ENCODE measurements at regions of chr7 and their contacts with region 1.

Region 1: DNA sequence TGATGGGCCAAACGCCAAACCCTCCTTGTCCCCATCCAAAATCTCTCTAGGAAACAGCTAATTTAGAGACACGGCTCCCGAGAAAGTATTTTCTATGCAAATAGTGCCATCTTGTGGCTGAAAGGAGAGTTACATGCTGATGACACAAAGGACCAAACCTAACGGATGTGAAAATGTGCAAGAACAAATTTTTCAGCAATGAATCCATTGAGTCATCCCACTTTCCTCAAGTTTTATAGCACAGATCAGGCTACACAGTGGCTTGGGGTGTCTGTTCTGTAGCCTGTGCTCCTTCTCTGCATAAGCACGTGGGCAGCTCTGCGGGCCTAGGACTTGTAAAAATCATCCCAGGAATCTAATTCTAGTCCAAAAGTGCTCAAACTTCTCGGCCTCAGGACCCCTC is 154.8 kb upstream of the PRR15 start:
- DNase-seq: peak in 1 of 2 experiments; percentile 76
- H3K4me3 ChIP-seq: no peak overlapping the region
- H3K4me3 Mint-ChIP-seq: no peak overlapping the region
- H3K27ac Mint-ChIP-seq: no peak overlapping the region
- H3K4me1 ChIP-seq: peaks cover 23% of the 10 kb centered on the region
- H3K4me1 Mint-ChIP-seq: peaks cover 22% of the 10 kb centered on the region
- H3K27me3 ChIP-seq: no peaks in the 10 kb centered on the region
- H3K27me3 Mint-ChIP-seq: no peaks in the 10 kb centered on the region
- CTCF ChIP-seq: peak; percentile 74 to 86

Region 2: DNA sequence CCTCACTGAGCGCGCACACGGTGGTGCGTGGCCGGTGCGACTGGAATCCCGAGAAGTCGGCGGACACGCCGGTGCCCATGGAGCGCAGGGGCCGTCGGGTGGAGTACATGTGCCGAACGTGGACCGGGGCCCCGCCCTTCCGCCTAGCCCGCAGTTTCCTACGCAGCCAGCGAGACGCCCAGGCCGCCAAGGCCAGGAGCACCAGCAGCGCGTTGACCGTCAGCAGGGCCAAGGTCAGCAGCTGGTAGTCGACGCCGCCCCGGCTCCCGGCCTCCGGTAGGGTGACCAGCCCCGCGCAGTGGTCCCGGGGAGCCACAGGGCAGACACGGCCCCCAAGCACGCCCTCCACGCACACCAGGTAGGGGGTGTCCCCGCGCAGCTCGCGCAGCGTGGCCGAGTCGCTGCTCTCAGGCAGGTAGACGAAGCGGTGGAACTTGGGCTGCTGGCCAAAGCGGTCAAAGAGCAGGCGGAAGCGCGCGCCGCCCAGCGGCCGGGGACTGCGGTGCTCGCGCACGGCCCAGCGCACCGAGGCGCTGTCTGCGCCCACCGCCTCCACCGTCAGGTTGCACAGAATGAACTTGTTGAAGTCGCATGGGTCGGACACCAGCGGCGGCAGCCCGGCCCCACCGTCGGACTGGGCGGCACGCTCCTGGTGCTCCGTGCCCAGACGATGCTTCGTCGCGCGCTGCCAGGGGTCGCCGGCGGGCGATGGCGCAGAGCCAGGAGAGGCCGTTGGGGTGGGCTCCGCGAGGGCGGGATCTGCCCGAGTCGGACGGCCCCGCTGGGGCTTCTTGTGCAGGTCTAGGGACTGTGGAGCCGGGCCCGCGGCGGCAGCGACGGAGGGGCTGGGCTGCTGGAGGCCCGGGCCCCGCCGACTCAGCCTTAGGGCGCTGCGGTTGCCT is 452.9 kb before region 1 on chr7:
- CTCF ChIA-PET with region 1: interaction called, 9 read pairs
- POLR2A ChIA-PET with region 1: no interaction called
- intact Hi-C with region 1: loop called (anchors 1 kb)
- DNase-seq: peak; percentile 84 to 89
- H3K4me3 ChIP-seq: peak overlapping the region; percentile 65
- H3K4me3 Mint-ChIP-seq: peak overlapping the region; percentile 73
- H3K27ac Mint-ChIP-seq: no peak overlapping the region
- H3K4me1 ChIP-seq: peaks cover 18% of the 10 kb centered on the region; the same call in 1 of the 2 replicates
- H3K4me1 Mint-ChIP-seq: peaks cover 17% of the 10 kb centered on the region
- H3K27me3 ChIP-seq: no peaks in the 10 kb centered on the region
- H3K27me3 Mint-ChIP-seq: no peaks in the 10 kb centered on the region
- CTCF ChIP-seq: peak; percentile 73 to 81

Region 3: DNA sequence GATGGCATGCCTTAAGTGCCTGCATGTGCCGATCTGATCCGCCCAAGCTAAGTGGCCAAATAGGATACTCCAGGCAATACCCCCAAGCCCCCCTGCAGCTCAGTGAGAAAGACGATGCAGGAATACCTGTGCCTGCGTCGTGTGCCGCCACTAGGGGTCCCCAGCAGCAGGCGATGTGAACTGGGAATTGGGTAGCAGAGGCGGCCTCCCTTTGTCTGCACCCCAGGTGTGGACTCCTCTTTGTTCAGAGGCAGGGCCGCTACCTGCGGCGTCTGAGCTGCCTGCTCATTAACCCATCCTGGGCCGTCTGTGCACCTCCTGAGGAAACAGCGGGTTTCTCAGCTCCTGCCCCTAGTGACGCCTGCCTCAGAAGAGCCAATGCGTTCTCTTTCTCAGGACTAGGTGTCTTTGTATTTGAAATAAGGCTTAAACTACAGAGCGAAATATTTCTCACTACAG is 219.1 kb before region 1 on chr7:
- CTCF ChIA-PET with region 1: interaction called, 23 read pairs
- POLR2A ChIA-PET with region 1: no interaction called
- intact Hi-C with region 1: loop called (anchors 1 kb)
- DNase-seq: peak; percentile 87 to 88
- H3K4me3 ChIP-seq: no peak overlapping the region
- H3K4me3 Mint-ChIP-seq: peak overlapping the region; percentile 60
- H3K27ac Mint-ChIP-seq: peak overlapping the region; percentile 18
- H3K4me1 ChIP-seq: peaks cover 26% of the 10 kb centered on the region
- H3K4me1 Mint-ChIP-seq: peaks cover 19% of the 10 kb centered on the region
- H3K27me3 ChIP-seq: no peaks in the 10 kb centered on the region
- H3K27me3 Mint-ChIP-seq: no peaks in the 10 kb centered on the region
- CTCF ChIP-seq: peak; percentile 91 to 96

Region 4: DNA sequence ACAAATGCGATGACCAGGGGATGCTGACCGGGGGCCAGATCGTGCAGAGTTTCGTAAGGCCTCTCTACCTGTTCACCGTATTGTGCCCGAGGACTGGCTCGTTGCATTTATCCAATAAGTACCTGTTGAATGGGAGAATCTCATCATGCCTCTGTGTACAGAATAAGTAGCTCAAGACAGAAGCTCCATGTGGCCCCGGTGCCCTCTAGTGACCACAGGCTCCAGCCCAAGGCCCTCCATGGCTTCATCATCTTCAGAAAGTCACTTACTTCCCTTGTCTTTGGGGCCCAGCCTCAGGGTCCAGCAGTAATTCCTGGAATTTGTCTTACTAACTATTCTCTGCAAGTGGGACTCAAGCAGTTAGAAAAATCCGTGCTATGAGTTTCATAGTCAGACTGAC is 63.2 kb before region 1 on chr7:
- CTCF ChIA-PET with region 1: interaction called, 6 read pairs
- POLR2A ChIA-PET with region 1: no interaction called
- intact Hi-C with region 1: loop called (anchors 1 kb)
- DNase-seq: peak; percentile 63 to 64
- H3K4me3 ChIP-seq: no peak overlapping the region
- H3K4me3 Mint-ChIP-seq: no peak overlapping the region
- H3K27ac Mint-ChIP-seq: no peak overlapping the region
- H3K4me1 ChIP-seq: no peaks in the 10 kb centered on the region; the same call in 1 of the 2 replicates
- H3K4me1 Mint-ChIP-seq: no peaks in the 10 kb centered on the region
- H3K27me3 ChIP-seq: no peaks in the 10 kb centered on the region
- H3K27me3 Mint-ChIP-seq: no peaks in the 10 kb centered on the region
- CTCF ChIP-seq: peak; percentile 55 to 81

Region 5: DNA sequence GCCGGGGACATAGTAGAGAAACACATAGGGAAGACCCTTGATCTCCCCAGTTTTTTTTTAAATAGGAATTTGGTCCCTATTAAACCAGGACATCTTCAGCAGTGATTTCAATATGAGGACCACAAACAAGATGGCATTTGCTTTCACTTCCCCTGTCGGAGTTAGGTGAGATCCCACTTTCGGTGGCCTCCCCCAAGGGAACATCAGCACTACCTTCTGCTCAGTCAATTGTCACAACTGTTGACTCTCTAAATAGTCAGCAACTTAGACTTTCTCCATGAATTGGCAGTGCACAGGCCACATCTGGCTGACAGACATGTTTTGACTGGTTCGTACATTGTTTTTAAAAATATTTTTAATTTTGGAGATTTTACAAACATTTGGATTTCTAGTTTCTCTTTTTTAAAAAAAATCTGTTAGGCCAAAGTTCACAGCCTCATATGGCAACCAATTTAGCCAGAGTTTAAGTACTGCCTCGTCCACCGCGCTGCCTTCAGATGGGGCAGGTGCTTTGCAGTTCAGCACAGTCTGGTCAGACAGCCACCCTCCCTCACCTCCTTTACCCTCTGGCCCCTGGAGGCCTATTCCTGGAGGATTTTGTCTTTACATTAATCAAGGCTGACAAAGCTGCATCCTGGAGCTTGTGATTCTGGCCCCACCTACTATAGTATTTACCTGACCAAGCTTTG is 15.6 kb after region 1 on chr7:
- CTCF ChIA-PET with region 1: no interaction called
- POLR2A ChIA-PET with region 1: no interaction called
- intact Hi-C with region 1: no loop called
- DNase-seq: no peak
- H3K4me3 ChIP-seq: no peak overlapping the region
- H3K4me3 Mint-ChIP-seq: no peak overlapping the region
- H3K27ac Mint-ChIP-seq: no peak overlapping the region
- H3K4me1 ChIP-seq: peaks cover 6% of the 10 kb centered on the region
- H3K4me1 Mint-ChIP-seq: no peaks in the 10 kb centered on the region
- H3K27me3 ChIP-seq: no peaks in the 10 kb centered on the region
- H3K27me3 Mint-ChIP-seq: no peaks in the 10 kb centered on the region
- CTCF ChIP-seq: no peak

Region 6: GRCh38 chr7:29564496-29565223 is 155.8 kb after region 1 on chr7:
- CTCF ChIA-PET with region 1: no interaction called
- POLR2A ChIA-PET with region 1: no interaction called
- intact Hi-C with region 1: loop called (anchors 1 kb)
- DNase-seq: peak; percentile 62 to 63
- H3K4me3 ChIP-seq: peak overlapping the region; percentile 71
- H3K4me3 Mint-ChIP-seq: peak overlapping the region; percentile 98
- H3K27ac Mint-ChIP-seq: peak overlapping the region; percentile 93
- H3K4me1 ChIP-seq: peaks cover 23% of the 10 kb centered on the region
- H3K4me1 Mint-ChIP-seq: peaks cover 6% of the 10 kb centered on the region
- H3K27me3 ChIP-seq: no peaks in the 10 kb centered on the region
- H3K27me3 Mint-ChIP-seq: no peaks in the 10 kb centered on the region
- CTCF ChIP-seq: no peak

Measured in Caco-2 (cell line).